Activated B cell treated with CpG ODN at 0.5 μM for 24 hours (primary cell): ENCODE measurements at regions of chr1 and their contacts with region 1.

Region 1: GRCh38 chr1:28088168-28088961 is at the start of gene EYA3:
- DNase-seq: peak; percentile 100
- ATAC-seq: peak; percentile 93
- H3K4me3 Mint-ChIP-seq: peak within 1 kb of the TSS; percentile 98
- H3K27ac Mint-ChIP-seq: peak within 1 kb of the TSS; percentile 98
- H3K4me1 Mint-ChIP-seq: peaks cover 39% of the 10 kb centered on the region
- H3K27me3 Mint-ChIP-seq: no peaks in the 10 kb centered on the region
- CTCF ChIP-seq: no peak
- total RNA-seq, gene EYA3: 26.7 and 31.0 TPM in 2 replicates

Region 2: GRCh38 chr1:27513958-27514357 is 574.4 kb before region 1 on chr1:
- CTCF ChIA-PET with region 1: no interaction called
- POLR2A ChIA-PET with region 1: no interaction called
- intact Hi-C with region 1: no loop called
- DNase-seq: no peak
- ATAC-seq: no peak
- H3K4me3 Mint-ChIP-seq: no peak overlapping the region
- H3K27ac Mint-ChIP-seq: no peak overlapping the region
- H3K4me1 Mint-ChIP-seq: peaks cover 2% of the 10 kb centered on the region
- H3K27me3 Mint-ChIP-seq: no peaks in the 10 kb centered on the region
- CTCF ChIP-seq: no peak

Region 3: GRCh38 chr1:28056129-28056925 is 32.0 kb before region 1 on chr1:
- CTCF ChIA-PET with region 1: interaction called, 4 read pairs
- POLR2A ChIA-PET with region 1: interaction called, 8 read pairs
- intact Hi-C with region 1: loop called (anchors 2 kb)
- DNase-seq: no peak
- ATAC-seq: peak; percentile 95
- H3K4me3 Mint-ChIP-seq: peak overlapping the region; percentile 12
- H3K27ac Mint-ChIP-seq: peak overlapping the region; percentile 84
- H3K4me1 Mint-ChIP-seq: peaks cover 32% of the 10 kb centered on the region
- H3K27me3 Mint-ChIP-seq: no peaks in the 10 kb centered on the region
- CTCF ChIP-seq: no peak

Region 4: GRCh38 chr1:28135371-28136168 is 47.2 kb after region 1 on chr1:
- CTCF ChIA-PET with region 1: interaction called, 4 read pairs
- POLR2A ChIA-PET with region 1: interaction called, 11 read pairs
- intact Hi-C with region 1: loop called (anchors 2 kb)
- DNase-seq: no peak
- ATAC-seq: peak; percentile 87
- H3K4me3 Mint-ChIP-seq: peak overlapping the region; percentile 66
- H3K27ac Mint-ChIP-seq: peak overlapping the region; percentile 74
- H3K4me1 Mint-ChIP-seq: peaks cover 63% of the 10 kb centered on the region
- H3K27me3 Mint-ChIP-seq: no peaks in the 10 kb centered on the region
- CTCF ChIP-seq: no peak

Region 5: GRCh38 chr1:28154078-28154594 is 65.8 kb after region 1 on chr1:
- CTCF ChIA-PET with region 1: interaction called, 13 read pairs
- POLR2A ChIA-PET with region 1: interaction called, 10 read pairs
- intact Hi-C with region 1: no loop called
- DNase-seq: no peak
- ATAC-seq: no peak
- H3K4me3 Mint-ChIP-seq: no peak overlapping the region
- H3K27ac Mint-ChIP-seq: no peak overlapping the region
- H3K4me1 Mint-ChIP-seq: peaks cover 10% of the 10 kb centered on the region
- H3K27me3 Mint-ChIP-seq: no peaks in the 10 kb centered on the region
- CTCF ChIP-seq: no peak

Region 6: DNA sequence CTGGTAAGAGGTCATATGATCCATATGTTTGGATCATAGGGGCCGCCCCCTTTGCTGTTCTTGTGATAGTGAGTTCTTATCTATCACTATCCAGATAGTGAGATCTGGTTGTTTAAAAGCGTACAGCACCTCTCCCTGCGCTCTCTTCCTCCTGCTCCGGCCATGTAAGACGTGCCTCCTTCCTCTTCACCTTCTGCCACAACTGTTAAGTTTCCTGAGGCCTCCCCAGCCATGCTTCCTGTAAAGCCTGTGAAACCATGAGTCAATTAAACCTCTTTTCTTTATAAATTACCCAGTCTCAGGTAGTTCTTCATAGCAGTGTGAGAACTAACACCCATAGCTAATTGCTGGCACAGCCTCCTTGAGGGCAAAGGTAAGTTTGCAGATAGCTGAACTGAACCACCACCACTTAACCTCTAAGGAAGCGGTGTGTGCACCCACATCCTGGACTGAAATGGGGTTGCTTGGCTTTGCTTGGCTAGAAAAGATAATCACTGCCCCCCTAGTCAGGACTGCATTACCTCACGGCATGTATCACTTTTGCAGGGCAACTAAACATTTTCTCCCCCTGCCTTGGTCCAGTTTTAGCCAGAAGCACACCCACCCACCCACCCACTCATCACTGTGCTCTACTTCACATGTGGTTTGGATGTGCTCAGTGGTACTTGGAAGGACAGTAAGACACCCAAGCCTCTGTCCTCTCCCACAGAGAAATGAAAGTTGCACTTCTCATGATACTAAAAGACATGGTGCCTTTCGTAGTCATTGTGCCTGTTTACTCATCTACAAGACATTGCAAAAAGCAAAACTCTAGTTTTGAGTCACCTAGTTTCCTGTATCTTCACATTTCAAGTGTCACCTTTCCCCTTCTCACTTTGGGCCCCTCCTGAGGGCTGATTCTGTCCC is 111.2 kb after region 1 on chr1:
- CTCF ChIA-PET with region 1: interaction called, 236 read pairs
- POLR2A ChIA-PET with region 1: interaction called, 10 read pairs
- intact Hi-C with region 1: no loop called
- DNase-seq: no peak
- ATAC-seq: peak; percentile 80
- H3K4me3 Mint-ChIP-seq: no peak overlapping the region
- H3K27ac Mint-ChIP-seq: peak overlapping the region; percentile 80
- H3K4me1 Mint-ChIP-seq: peaks cover 22% of the 10 kb centered on the region
- H3K27me3 Mint-ChIP-seq: no peaks in the 10 kb centered on the region
- CTCF ChIP-seq: no peak

Region 7: GRCh38 chr1:28505406-28506187 is 417.2 kb after region 1 on chr1 and contains the start of gene RCC1:
- CTCF ChIA-PET with region 1: no interaction called
- POLR2A ChIA-PET with region 1: no interaction called
- intact Hi-C with region 1: loop called (anchors 5 kb)
- DNase-seq: peak; percentile 82
- ATAC-seq: peak; percentile 87
- H3K4me3 Mint-ChIP-seq: peak within 1 kb of the TSS; percentile 98
- H3K27ac Mint-ChIP-seq: peak within 1 kb of the TSS; percentile 98
- H3K4me1 Mint-ChIP-seq: peaks cover 38% of the 10 kb centered on the region
- H3K27me3 Mint-ChIP-seq: no peaks in the 10 kb centered on the region
- CTCF ChIP-seq: no peak
- total RNA-seq, gene RCC1: 45.2 and 47.5 TPM in 2 replicates